ENCODE measurements at regions of chr20 and their contacts with region 1.

Region 1: DNA sequence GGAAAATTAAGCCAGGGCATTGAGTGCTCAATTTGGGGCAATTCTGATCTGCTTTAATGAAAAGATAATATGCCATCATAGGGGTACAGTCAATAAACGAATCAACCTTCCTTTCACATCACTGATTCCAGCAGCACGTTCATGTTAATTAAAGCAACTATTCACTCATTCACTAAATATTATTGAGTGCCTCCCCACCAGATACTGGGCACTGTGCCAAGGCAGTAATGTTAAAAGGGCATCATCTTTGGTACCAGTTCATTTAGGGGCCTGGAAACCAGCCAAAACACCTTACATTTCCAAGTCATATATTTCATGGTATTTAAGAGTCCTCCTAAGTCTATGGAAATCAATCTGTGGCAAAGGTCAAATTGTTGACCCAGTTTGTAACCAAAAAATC is 121.3 kb upstream of the EMILIN3 start:
- DNase-seq: no peak
- H3K27ac ChIP-seq: no peak overlapping the region
- CTCF ChIP-seq: no peak

Region 2: DNA sequence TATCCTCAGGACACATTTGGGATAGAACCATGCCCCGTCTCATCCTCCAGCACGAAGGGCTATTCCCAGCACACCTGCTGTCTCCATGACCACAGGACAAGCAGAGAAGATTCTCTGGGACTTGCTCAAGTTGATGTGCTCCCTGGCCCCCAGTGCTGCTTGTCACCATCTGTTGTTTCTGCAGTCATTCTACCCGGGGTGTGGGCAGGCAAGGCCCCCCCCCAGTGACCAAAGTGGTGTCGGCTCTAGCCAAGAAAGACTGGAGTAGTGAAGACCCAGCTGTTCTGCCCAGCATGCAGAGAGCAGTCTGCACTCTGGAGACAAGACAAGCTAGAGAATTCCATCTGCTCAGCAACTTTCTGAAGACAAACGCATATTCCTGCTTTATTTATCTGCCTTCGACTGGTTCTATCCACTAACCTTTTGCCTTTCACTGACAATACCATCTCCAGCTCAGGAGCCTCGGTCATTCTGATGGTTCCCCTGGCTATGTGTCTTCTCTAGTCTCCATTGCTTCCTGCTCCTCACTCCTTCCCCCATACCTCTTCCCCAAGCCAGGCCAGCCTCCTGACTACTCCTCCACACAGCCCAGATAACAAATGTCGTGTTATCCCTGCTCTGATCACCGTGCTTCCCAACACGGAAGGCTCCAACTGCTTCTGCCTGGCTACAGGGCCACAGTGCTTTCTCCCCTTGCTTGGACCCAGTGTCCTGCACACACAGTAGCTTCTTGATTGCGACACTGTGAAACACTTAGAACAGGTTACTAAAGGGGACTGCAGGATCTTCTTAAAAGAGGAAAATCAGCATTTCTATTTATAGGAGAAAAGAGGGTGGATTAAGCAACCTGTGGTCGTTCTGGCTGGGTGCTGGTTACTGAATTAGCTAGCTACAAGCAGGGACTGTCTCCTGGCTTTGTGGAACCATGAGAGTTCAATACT is 34.6 kb before region 1 on chr20:
- CTCF ChIA-PET with region 1: no interaction called
- POLR2A ChIA-PET with region 1: no interaction called
- DNase-seq: no peak
- H3K27ac ChIP-seq: no peak overlapping the region
- CTCF ChIP-seq: no peak

Region 3: DNA sequence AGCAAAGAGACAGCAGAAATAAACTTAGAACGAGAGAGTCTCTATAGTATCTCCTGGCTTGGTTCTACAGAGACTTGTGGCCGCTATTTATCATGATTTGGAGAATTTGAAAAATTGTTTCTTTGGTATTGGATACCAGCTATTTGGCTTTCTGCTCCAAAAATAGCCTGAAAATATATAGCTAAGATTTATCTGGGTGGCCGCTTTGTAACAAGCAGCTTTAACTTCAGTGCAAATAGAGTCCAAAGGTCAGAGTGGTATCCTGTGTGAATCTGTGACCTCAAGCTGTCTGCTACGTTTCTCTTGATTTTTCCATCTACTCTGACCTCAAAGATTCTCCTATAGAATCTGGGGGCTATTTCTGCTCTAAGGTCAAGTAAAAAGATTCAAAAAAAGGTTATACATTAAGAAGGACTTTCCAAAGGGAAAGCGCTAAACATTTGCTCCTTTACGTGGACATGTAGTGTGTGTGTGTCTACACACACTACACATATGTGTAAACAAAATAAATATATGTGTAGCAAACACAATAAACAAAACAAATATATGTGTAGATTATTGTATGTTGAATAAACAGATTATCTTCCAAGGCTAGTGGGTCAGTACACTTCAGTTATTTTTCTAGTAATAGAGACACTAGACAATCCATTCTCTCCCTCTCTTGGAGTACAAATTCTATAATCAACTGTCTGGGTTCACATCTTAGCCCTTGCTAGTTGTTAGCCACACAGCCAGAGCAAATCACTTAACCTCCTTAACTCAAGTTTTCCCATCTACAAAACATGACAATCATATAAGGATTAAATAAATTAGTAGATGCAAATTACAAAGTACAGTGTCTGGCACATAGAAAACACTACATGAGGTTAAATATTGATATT is 89.5 kb after region 1 on chr20:
- CTCF ChIA-PET with region 1: interaction called, 12 read pairs
- POLR2A ChIA-PET with region 1: no interaction called
- DNase-seq: no peak
- H3K27ac ChIP-seq: no peak overlapping the region
- CTCF ChIP-seq: no peak